ENCODE measurements at regions of chr7 and their contacts with region 1.

Region 1: GRCh38 chr7:137169282-137169698 is 174.2 kb downstream of the PTN start:
- DNase-seq: peak; percentile 54
- ATAC-seq: no peak
- H3K4me3 ChIP-seq: no peak overlapping the region
- H3K27ac ChIP-seq: no peak overlapping the region
- H3K4me1 ChIP-seq: no peaks in the 10 kb centered on the region
- H3K27me3 ChIP-seq: no peaks in the 10 kb centered on the region
- CTCF ChIP-seq: peak; percentile 70

Region 2: DNA sequence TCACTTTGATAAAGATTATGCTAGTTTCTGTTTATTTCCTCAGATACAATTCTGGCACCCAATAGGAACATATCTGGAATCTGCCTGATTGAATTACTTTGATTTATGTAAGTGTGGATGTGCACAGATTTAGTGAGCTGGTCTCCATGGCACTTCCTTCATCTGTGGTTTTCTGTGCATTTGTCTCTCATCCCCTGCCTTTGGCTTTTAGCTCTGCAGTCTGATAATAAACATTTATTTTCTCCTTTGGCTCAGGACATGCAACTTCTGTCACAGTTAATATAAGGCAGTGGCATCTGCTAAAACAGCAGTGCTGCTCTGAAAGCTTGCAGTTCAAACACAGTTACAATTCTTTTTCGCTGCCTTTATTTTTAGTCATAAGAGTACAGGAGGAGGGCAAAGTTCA is 574.5 kb before region 1 on chr7:
- CTCF ChIA-PET with region 1: no interaction called
- POLR2A ChIA-PET with region 1: no interaction called
- in situ Hi-C with region 1: no loop called
- intact Hi-C with region 1: no loop called
- DNase-seq: no peak
- ATAC-seq: no peak
- H3K4me3 ChIP-seq: no peak overlapping the region
- H3K27ac ChIP-seq: no peak overlapping the region
- H3K4me1 ChIP-seq: no peaks in the 10 kb centered on the region
- H3K27me3 ChIP-seq: no peaks in the 10 kb centered on the region
- CTCF ChIP-seq: no peak

Region 3: DNA sequence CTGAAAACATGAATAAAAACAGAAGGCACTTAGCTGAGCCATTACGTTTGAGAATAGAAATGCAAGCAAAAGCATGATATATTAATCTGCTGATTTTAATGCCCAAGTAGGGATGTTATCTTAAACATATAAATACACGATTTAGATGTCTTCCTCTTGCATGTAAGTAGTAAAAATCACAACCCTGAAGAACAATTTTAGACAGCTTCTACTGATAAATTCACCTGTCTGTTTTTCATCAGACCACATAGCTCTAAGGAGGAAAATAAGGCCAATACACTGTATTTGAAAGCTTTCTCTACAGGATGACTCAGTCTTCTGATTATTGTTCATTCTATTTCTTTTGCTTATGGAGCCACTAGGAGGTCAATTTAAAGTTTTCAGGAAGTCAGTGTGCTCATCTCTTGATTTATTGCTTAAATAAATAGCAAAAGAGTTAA is 511.8 kb before region 1 on chr7:
- CTCF ChIA-PET with region 1: no interaction called
- POLR2A ChIA-PET with region 1: no interaction called
- in situ Hi-C with region 1: no loop called
- intact Hi-C with region 1: no loop called
- DNase-seq: no peak
- ATAC-seq: no peak
- H3K4me3 ChIP-seq: no peak overlapping the region
- H3K27ac ChIP-seq: no peak overlapping the region
- H3K4me1 ChIP-seq: no peaks in the 10 kb centered on the region
- H3K27me3 ChIP-seq: no peaks in the 10 kb centered on the region
- CTCF ChIP-seq: no peak

Region 4: GRCh38 chr7:137454246-137454724 is 285.0 kb after region 1 on chr7:
- CTCF ChIA-PET with region 1: no interaction called
- POLR2A ChIA-PET with region 1: no interaction called
- in situ Hi-C with region 1: no loop called
- intact Hi-C with region 1: loop called (anchors 5 kb)
- DNase-seq: peak; percentile 20
- ATAC-seq: no peak; the same call in 1 of the 2 replicates
- H3K4me3 ChIP-seq: no peak overlapping the region
- H3K27ac ChIP-seq: no peak overlapping the region
- H3K4me1 ChIP-seq: no peaks in the 10 kb centered on the region
- H3K27me3 ChIP-seq: peaks cover 3% of the 10 kb centered on the region; the same call in 1 of the 2 replicates
- CTCF ChIP-seq: peak; percentile 71; the same call in 1 of the 2 replicates

Region 5: DNA sequence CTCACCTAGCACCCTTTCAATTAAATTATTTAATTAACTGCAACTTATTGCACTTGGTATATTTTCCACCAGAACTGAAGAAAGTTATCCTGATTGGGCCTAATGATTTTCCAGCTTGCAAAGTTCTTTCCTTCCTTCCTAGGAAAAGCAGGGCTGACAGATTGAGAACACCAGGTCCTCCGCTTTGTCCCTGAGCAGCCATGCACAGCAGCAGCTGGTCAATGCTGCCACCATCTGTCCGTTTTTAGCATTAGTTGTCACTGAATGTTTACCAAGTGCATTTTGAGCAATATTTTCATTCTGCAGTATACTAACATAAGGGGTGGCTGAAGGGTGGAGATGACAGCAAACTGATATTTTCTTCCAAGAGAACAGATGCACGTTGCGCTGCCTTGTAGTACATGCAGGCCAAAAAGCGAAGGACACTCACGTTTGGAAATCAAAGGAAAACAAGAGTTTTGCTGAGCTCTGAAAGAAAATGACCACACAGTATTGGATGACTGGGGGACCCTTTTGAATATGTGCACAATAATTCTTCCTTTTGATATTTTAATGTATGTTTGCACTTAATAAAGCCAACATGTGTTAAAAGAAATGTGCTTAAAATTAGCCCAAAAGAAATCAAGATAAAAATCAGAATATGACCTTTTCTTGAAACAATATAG is 423.1 kb after region 1 on chr7:
- CTCF ChIA-PET with region 1: no interaction called
- POLR2A ChIA-PET with region 1: no interaction called
- in situ Hi-C with region 1: no loop called
- intact Hi-C with region 1: loop called (anchors 10 kb)
- DNase-seq: peak; percentile 59
- ATAC-seq: peak; percentile 91
- H3K4me3 ChIP-seq: no peak overlapping the region
- H3K27ac ChIP-seq: no peak overlapping the region
- H3K4me1 ChIP-seq: no peaks in the 10 kb centered on the region
- H3K27me3 ChIP-seq: peaks cover 1% of the 10 kb centered on the region; the same call in 1 of the 2 replicates
- CTCF ChIP-seq: peak; percentile 88